Spleen (tissue), 13 donors: ENCODE measurements at regions of chr11 and their contacts with region 1.

Region 1: DNA sequence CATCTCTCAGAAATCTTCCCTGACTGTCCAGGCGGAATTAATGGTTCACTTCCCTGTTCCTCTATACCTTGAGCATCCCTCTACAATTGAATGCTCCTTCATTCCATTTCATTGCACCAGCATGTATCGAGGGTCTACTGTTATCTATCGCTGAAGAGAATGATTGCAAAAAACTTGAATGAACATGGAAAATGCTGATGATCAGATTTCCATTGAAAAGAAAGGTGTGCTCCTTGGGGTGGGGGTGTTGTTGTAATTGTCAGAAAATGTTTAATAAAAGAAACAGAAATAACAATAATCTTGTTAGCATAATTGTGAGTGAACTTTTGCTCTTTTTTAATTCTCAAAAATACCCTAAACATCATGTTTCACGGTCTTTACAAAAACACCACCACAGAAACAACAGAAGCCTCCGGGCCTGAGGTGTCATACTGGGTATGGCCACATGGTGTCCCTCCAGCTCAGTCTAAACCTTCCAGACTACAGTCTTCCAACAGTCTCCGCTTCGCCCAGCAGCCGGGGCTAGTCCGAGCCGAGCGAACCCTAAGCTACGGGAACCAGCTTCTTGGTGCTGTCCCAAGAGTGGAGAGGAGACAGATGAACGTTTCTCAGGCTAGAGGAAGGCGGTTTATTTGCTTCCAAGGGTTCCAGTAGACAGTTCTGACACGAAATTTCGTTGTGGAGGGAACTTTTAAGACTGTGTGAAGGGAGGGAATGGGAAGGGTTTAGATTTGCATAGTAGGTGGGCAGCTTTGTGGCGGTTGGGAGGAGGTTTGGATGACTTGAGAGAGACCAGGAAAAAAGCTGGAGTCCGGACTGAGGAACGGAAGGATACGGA is 75.8 kb upstream of the ZBED5 start:
- DNase-seq: peak; percentile 93
- H3K4me3 ChIP-seq: peak overlapping the region in 6 of 8 donors; percentile 12 to 65 (median 24)
- H3K27ac ChIP-seq: peak overlapping the region in 7 of 8 donors; percentile 44 to 67 (median 49)
- H3K4me1 ChIP-seq: peaks cover 3 to 46% (median 30%) of the 10 kb centered on the region in 6 donors
- H3K27me3 ChIP-seq: peaks cover 0 to 49% (median 24%) of the 10 kb centered on the region in 7 donors
- CTCF ChIP-seq: peak; percentile 86 to 98 (median 95)
- POLR2A ChIP-seq: no peak

Region 2: GRCh38 chr11:11009179-11009578 is 75.5 kb after region 1 on chr11:
- intact Hi-C with region 1: loop called (anchors 5 kb)
- DNase-seq: no peak
- H3K4me3 ChIP-seq: no peak overlapping the region
- H3K27ac ChIP-seq: no peak overlapping the region
- H3K4me1 ChIP-seq: peaks cover 0 to 18% (median 2%) of the 10 kb centered on the region in 6 donors
- H3K27me3 ChIP-seq: peaks cover 0 to 34% (median 5%) of the 10 kb centered on the region in 7 donors
- CTCF ChIP-seq: no peak
- POLR2A ChIP-seq: no peak

Region 3: DNA sequence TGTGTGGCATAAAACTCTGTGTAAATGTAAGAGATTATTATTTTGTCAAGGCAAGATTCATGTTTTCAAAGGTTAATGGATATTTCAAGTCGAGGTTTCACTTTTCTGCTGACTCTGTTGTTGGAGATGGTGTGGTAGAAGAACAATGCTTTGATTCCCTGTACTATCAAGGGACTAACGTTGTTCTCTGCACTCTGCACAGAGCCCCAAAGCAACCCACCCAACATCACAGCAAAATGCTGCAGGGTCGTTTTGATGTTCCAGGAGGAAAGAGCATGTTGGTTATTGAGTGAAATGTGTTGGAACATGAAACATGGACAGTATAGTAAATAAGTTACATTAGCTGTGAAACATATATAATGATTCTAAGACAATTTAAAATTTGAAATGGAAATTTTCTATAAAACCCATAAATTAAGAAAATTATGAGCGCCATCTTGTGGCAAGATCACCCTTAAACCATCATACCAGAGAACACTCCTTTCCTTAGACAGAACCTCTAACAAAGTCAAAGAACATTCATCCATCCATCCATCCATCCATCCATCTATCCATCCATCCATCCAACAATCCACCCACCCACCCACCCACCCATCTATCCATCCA is 88.6 kb after region 1 on chr11:
- intact Hi-C with region 1: loop called (anchors 5 kb)
- DNase-seq: no peak
- H3K4me3 ChIP-seq: no peak overlapping the region
- H3K27ac ChIP-seq: no peak overlapping the region
- H3K4me1 ChIP-seq: peaks cover 0 to 7% (median 0%) of the 10 kb centered on the region in 6 donors
- H3K27me3 ChIP-seq: no peaks in the 10 kb centered on the region
- CTCF ChIP-seq: peak in 10 of 11 experiments; percentile 15 to 71 (median 54)
- POLR2A ChIP-seq: no peak

Region 4: DNA sequence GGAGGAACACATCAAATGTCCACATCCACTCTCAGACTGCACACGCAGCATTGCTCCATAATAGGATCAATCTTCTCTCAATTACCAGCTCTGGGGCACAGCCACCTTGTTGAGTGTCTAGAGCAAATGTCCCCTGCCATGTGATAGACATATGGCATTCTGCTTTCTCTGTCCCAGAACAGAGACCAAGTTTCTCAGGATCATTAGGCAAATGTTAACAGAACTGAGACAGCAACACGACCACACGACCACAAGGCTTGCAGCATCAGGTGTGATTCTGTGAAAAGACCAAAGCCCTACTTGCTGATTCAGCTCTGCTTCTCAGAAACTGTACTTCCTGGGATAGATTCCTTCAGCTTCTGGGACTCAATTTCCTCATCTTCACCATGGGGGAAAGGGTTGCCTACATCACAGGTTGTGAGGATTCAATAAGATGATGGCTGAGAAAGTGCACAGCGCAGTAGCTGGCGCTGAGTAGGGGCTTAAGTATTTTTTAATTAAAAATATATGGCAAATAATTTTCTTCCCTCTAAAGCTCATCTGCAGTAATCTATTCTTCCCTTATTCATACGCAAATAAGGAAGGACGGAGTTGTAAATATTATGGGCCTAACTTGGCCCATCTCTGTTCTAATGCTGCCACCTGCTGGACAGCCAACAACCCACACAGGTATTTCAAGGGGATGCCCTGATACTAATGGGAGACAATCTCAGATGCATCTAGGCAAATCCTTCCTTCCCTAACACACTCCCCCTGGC is 853.8 kb after region 1 on chr11:
- intact Hi-C with region 1: loop called (anchors 10 kb)
- DNase-seq: peak; percentile 80
- H3K4me3 ChIP-seq: no peak overlapping the region
- H3K27ac ChIP-seq: no peak overlapping the region
- H3K4me1 ChIP-seq: peaks cover 0 to 9% (median 0%) of the 10 kb centered on the region in 6 donors
- H3K27me3 ChIP-seq: peaks cover 0 to 10% (median 0%) of the 10 kb centered on the region in 7 donors
- CTCF ChIP-seq: peak; percentile 66 to 89 (median 84)
- POLR2A ChIP-seq: no peak